Adrenal gland (tissue), 19 donors: ENCODE measurements at regions of chr10 and their contacts with region 1.

Region 1: DNA sequence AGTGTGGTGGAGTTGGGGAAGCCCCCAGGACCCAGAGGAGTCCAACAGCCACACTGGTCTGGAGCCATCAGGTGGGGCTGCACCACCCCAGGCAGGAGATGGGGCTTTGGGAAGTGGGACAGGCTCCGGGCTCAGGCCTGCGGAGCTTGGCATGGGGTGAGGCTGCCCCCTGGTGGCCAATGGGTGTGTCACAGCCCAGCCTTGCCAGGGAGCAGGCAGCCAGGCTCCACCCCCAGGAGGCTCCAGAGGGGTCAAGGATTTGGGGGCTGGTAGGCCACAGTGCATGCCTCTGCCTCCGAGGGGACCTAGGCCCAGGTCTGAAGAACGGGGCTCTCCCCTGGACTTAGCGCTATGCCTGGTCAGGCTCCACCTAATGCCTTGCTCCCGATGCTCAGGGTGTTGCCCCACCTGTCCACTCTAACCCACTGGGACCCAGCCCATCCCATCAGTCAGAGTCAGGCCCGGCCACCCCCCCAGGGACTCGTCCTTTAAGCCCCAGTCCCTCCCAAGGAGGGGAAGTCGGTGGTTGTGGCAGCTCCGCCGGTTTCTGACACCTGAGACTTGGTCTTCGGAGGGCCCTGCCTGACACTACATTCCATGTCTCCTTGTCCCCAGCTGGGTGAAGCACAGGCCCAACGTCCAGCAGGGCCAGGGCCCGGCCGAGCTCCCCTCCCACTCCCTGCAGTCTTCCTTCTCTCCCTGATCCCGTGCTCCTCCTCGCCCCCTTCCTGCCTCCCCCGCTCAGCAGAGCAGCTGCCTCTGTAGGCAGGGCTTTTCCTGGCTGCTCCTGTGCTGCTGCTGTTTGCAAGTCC is 11.3 kb upstream of the SAMD8 start:
- DNase-seq: peak; percentile 64 to 89 (median 81)
- H3K4me3 ChIP-seq: no peak overlapping the region
- H3K27ac ChIP-seq: no peak overlapping the region
- H3K4me1 ChIP-seq: no peaks in the 10 kb centered on the region
- H3K27me3 ChIP-seq: no peaks in the 10 kb centered on the region
- CTCF ChIP-seq: peak; percentile 95 to 99 (median 98)
- POLR2A ChIP-seq: no peak

Region 2: GRCh38 chr10:74244097-74244685 is 856.0 kb before region 1 on chr10:
- intact Hi-C with region 1: loop called (anchors 5 to 10 kb)
- DNase-seq: peak in 2 of 7 donors; percentile 42 to 51
- H3K4me3 ChIP-seq: no peak overlapping the region
- H3K27ac ChIP-seq: no peak overlapping the region
- H3K4me1 ChIP-seq: no peaks in the 10 kb centered on the region
- H3K27me3 ChIP-seq: no peaks in the 10 kb centered on the region
- CTCF ChIP-seq: peak; percentile 44 to 72 (median 53)
- POLR2A ChIP-seq: no peak

Region 3: DNA sequence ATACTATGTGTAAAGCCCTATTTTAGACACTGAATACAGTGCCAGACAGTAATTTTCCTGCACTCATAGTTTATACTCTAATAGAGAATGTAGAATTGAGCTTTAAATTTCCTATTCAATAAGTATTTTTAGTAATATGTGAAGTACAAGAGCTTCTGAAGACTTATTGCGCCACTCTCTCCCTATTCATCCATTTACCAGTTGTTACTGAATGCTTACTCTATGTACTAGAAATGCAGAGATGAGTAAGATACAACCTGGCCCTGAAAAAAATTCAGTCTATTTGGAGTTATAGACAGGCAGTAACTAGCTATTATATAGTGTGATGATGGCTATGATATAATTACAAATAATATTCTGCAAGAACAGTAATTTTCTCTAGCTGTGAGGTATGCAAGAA is 850.3 kb before region 1 on chr10:
- intact Hi-C with region 1: loop called (anchors 5 to 10 kb)
- DNase-seq: no peak
- H3K4me3 ChIP-seq: no peak overlapping the region
- H3K27ac ChIP-seq: no peak overlapping the region
- H3K4me1 ChIP-seq: no peaks in the 10 kb centered on the region
- H3K27me3 ChIP-seq: no peaks in the 10 kb centered on the region
- CTCF ChIP-seq: no peak
- POLR2A ChIP-seq: no peak

Region 4: DNA sequence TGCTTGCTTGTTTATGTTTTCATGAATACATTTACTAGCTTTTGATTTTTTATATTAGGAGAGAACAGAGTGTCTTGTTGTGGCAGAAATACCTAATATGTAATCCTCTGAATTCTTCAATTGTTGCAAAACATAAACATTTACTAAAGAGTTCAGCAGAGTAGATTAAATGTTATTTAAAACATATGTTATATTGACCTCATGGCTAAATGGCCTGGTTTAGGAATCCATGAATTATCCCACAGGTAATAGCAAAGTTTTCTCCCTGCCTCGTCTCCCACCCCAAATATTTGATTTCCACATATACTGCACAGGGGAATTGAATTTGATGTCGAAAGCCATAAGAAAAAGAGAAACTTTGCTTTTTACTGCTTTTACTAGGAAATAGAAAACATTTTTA is 837.3 kb before region 1 on chr10:
- intact Hi-C with region 1: loop called in 1 of 2 experiments (anchors 5 kb)
- DNase-seq: no peak
- H3K4me3 ChIP-seq: no peak overlapping the region
- H3K27ac ChIP-seq: no peak overlapping the region
- H3K4me1 ChIP-seq: no peaks in the 10 kb centered on the region
- H3K27me3 ChIP-seq: no peaks in the 10 kb centered on the region
- CTCF ChIP-seq: no peak
- POLR2A ChIP-seq: no peak

Region 5: GRCh38 chr10:75048669-75049098 is 51.5 kb before region 1 on chr10:
- intact Hi-C with region 1: no loop called
- DNase-seq: peak in 1 of 7 donors; percentile 14
- H3K4me3 ChIP-seq: no peak overlapping the region
- H3K27ac ChIP-seq: no peak overlapping the region
- H3K4me1 ChIP-seq: no peaks in the 10 kb centered on the region
- H3K27me3 ChIP-seq: no peaks in the 10 kb centered on the region
- CTCF ChIP-seq: no peak
- POLR2A ChIP-seq: no peak